PC-3 (cell line): ENCODE measurements at regions of chr12 and their contacts with region 1.

Region 1: DNA sequence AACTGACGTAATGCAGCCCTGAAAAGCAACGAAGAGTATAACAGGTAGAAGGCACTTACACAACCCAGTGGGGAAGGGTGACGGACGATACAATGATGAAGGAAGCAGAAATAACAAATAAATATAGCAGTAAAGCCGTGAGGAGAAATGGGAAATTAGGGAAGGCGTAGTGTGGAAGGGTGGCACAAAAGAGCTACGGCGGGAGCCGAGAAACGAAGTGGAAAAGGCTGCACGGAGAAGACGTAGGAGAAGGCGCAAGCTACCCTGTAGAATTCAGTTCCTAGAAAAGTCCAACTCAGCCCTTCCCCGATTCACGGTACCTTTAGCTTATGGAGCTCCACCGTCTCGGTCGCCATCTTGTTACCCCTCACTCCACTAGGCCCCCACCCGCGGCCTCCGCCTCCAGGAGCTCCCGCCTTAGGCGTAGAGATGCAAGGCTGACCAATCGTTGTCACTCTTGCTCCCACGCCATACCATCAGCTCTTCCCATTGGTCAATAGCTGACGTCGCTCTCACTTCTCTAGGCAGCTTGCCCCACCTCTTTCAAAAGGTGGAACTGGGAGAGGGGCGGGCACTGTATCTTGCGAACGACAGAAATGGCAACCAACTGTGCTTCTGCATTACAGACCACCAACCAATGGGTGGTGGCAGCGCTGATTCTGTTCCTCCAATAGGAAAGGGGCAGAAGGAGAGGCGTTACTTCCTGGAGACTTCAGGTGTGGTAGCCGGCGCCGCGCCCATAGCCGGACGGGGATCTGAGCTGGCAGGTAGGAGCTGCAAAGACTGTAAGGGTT is at the starts of genes ORMDL2 and SARNP:
- DNase-seq: peak; percentile 100
- ATAC-seq: peak; percentile 94
- H3K4me3 ChIP-seq: peak within 1 kb of the TSS; percentile 94
- H3K27ac ChIP-seq: peak within 1 kb of the TSS; percentile 51
- H3K4me1 ChIP-seq: peaks cover 21% of the 10 kb centered on the region
- H3K27me3 ChIP-seq: no peaks in the 10 kb centered on the region
- CTCF ChIP-seq: no peak
- total RNA-seq, gene ORMDL2: 19.2 and 30.6 TPM in 2 replicates
- total RNA-seq, gene SARNP: 103 and 108 TPM in 2 replicates

Region 2: DNA sequence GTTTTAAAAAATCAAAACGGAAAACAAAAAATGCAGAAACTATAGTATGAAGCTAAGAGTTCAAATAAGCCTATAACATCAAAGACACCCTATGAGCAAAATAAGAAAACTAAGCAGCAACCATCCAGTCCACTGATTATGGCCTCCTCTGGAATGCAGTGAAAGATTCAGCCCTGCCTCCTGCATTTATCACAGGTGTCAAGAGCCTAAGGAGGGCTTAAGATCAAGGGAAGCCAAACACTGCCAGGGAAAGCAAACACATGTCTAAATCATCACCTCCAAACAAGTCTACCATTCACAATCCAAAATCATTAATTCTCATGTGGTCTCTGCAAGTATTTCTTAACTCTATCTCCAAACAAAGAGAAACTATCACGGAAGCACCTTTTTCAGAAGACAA is 28.4 kb before region 1 on chr12:
- CTCF ChIA-PET with region 1: no interaction called
- POLR2A ChIA-PET with region 1: no interaction called
- intact Hi-C with region 1: no loop called
- DNase-seq: no peak
- ATAC-seq: no peak
- H3K4me3 ChIP-seq: no peak overlapping the region
- H3K27ac ChIP-seq: no peak overlapping the region
- H3K4me1 ChIP-seq: no peaks in the 10 kb centered on the region
- H3K27me3 ChIP-seq: no peaks in the 10 kb centered on the region
- CTCF ChIP-seq: no peak

Region 3: DNA sequence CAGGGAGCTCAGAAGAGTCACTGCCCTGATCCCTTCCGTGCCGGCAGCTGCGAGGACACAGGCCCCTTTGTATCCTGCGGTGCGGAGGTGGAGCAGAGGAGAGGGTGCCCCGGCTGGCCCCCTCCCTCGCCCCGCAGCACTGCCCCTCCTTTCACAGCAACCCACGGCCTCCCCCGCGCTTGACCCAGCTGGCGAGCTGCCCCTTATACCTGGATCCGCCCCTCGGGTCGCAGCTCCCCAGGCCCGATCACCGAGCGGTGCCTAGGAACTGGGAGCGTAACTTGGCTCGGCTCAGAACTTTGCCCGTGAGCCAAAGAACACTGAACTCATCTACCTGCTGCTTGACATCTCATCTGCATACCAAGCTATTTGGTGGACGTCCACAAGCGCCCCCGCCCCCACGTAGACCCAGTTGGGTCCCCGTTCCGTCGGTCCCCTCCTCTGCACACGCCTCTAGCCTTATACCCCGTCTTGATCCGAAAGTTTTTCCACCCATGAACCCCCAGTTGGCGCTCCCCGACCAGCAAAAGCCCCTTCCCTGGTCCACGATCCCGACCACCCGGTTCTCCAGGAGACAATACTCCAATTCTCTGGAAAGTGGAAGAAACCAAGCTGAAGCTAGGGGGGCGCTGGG is 12.5 kb after region 1 on chr12:
- CTCF ChIA-PET with region 1: interaction called, 3 read pairs
- POLR2A ChIA-PET with region 1: interaction called, 32 read pairs
- intact Hi-C with region 1: loop called (anchors 1 kb)
- DNase-seq: peak; percentile 24
- ATAC-seq: peak; percentile 42
- H3K4me3 ChIP-seq: peak overlapping the region; percentile 83
- H3K27ac ChIP-seq: peak overlapping the region; percentile 66
- H3K4me1 ChIP-seq: peaks cover 24% of the 10 kb centered on the region
- H3K27me3 ChIP-seq: no peaks in the 10 kb centered on the region
- CTCF ChIP-seq: no peak

Region 4: DNA sequence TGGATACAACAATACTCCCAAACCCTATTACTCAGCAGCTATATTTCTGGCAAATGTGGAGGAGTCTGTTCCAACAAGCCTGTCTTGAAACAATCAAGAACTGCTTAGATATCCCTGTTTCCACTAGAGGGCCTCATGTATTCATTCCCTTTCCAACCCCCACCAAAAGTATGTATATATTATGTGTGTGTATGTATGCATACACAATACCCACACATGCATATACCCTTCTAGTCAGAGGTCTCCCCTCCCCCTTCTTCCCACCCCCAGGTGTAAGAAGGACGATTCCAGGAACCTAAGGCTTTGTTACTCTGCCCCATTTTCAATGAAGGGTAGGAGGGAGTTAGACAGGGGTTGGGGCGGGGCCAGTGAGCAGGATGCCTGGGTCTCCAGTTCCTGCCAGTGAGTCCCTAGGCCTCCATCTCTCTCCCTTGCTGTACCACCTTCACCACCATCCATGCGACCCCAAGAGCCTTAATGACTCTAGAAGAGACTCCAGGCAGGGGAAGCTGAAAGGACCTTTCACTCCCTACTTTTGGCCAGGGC is 113.3 kb after region 1 on chr12 and contains the start of gene DGKA:
- CTCF ChIA-PET with region 1: interaction called, 7 read pairs
- POLR2A ChIA-PET with region 1: interaction called, 5 read pairs
- intact Hi-C with region 1: loop called (anchors 2 kb)
- DNase-seq: peak; percentile 75
- ATAC-seq: peak; percentile 23
- H3K4me3 ChIP-seq: peak within 1 kb of the TSS; percentile 82
- H3K27ac ChIP-seq: peak within 1 kb of the TSS; percentile 38
- H3K4me1 ChIP-seq: peaks cover 47% of the 10 kb centered on the region
- H3K27me3 ChIP-seq: no peaks in the 10 kb centered on the region
- CTCF ChIP-seq: peak; percentile 81
- total RNA-seq, gene DGKA: 27.2 and 41.5 TPM in 2 replicates

Region 5: DNA sequence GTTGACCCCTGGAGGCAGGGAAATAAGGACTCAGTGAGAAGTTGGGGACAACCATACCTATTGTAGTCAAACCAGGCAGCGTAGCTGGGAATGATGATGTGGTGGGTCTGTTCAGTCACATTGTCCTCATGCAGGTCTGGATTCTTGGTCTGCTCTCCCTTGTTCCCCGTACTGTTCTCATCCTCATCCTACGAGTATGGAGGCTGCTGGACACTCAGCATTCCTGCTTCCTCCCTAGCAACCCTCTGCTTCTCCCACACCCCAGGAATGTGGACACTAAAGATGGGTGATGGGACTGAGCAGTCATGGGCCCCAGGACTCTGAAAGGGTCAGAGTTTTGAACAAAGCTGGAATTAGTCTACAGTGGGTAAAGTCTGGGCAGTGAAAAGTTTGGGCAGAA is 360.8 kb after region 1 on chr12:
- CTCF ChIA-PET with region 1: no interaction called
- POLR2A ChIA-PET with region 1: interaction called, 10 read pairs
- intact Hi-C with region 1: no loop called
- DNase-seq: no peak
- ATAC-seq: no peak
- H3K4me3 ChIP-seq: no peak overlapping the region
- H3K27ac ChIP-seq: no peak overlapping the region
- H3K4me1 ChIP-seq: no peaks in the 10 kb centered on the region
- H3K27me3 ChIP-seq: no peaks in the 10 kb centered on the region
- CTCF ChIP-seq: no peak